Dendritic cell treated with granulocyte-macrophage colony-stimulating factor and Interleukin-4, amounts not matched to agents 40 ng/mL and 50 ng/mL, for 4 days (primary cell): ENCODE measurements at regions of chr14 and their contacts with region 1.

Region 1: DNA sequence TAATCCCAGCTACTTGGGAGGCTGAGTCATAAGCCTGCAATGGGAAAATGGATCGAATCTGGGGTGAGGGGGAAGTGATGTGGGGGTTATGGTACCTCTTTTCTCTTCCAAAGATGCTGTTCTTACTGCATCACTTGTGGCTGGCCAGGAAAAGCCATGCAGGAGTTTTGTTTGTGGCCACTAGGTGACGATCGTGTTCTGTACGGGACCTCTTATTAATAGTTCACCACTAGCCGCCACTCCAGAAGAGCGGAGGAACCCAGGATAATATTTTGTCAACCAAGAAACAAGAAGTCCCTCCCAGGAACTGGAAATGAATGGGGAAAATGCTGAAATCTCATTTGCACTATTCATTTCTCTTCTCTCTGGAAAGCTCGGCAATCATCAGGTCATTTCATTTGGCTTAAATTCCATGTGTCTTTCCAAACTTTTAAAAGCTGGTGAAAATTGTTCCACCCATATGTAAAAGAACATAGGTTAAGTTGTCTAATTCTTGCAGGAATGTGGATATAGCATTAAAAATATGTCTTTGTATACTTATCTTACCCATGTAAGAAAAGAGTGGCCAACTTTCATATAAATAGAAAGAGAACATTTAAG is 8.9 kb downstream of the GPR65 start:
- H3K4me3 Mint-ChIP-seq: no peak overlapping the region
- H3K27ac Mint-ChIP-seq: no peak overlapping the region
- H3K4me1 Mint-ChIP-seq: peaks cover 39% of the 10 kb centered on the region
- H3K27me3 Mint-ChIP-seq: no peaks in the 10 kb centered on the region

Region 2: DNA sequence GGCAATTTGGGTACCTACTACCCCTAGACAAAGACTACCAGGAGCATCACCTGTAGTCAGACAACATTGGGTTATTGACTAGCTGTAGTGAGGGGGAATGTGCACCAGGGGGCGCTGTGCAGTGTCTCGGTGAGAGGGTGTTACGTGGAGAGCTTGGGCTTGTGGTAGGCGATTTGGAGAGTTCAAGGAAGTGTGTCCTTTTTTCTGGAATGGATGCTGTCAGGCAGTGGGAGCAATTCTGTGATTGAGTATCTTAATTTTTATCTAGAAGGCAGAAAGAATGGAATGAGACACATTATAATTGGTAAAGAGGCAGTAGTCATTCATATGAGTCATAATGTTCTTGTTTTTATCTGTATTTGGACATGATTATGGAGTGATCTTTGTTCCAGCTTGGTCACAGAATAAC is 208.5 kb before region 1 on chr14:
- intact Hi-C with region 1: no loop called
- H3K4me3 Mint-ChIP-seq: no peak overlapping the region
- H3K27ac Mint-ChIP-seq: no peak overlapping the region
- H3K4me1 Mint-ChIP-seq: no peaks in the 10 kb centered on the region
- H3K27me3 Mint-ChIP-seq: no peaks in the 10 kb centered on the region

Region 3: DNA sequence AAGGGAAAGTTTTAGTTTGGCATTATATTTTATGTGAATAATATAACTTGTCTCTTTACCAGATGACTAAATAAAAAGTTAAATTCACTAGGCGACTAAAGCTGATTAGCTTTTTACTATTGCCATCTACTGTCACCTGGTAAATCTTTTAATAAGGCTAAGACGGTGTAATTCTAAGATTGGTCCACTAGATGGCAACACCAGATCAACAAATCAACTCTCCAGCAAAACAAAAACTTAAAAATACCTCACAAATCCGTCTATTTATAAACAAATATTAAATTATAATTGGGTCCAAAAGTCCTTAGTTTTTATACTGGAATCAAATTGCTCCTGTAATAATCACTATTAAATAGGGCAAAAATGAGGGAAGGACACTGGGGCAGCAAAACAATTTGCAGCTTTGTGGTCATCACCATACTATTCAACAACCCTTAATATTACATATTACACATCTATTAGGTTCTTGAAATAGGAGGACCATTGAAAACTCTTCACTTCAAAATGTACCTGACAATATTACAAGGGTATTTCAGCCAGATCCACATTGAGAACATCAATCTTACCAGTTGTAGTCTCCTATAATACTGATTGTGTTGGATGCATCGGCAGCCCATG is 68.8 kb before region 1 on chr14:
- intact Hi-C with region 1: loop called (anchors 2 kb)
- H3K4me3 Mint-ChIP-seq: no peak overlapping the region
- H3K27ac Mint-ChIP-seq: no peak overlapping the region
- H3K4me1 Mint-ChIP-seq: peaks cover 6% of the 10 kb centered on the region
- H3K27me3 Mint-ChIP-seq: no peaks in the 10 kb centered on the region

Region 4: GRCh38 chr14:88044851-88045339 is 31.0 kb after region 1 on chr14:
- intact Hi-C with region 1: loop called (anchors 5 kb)
- H3K4me3 Mint-ChIP-seq: peak overlapping the region; percentile 35
- H3K27ac Mint-ChIP-seq: peak overlapping the region; percentile 80
- H3K4me1 Mint-ChIP-seq: peaks cover 56% of the 10 kb centered on the region
- H3K27me3 Mint-ChIP-seq: no peaks in the 10 kb centered on the region

Region 5: DNA sequence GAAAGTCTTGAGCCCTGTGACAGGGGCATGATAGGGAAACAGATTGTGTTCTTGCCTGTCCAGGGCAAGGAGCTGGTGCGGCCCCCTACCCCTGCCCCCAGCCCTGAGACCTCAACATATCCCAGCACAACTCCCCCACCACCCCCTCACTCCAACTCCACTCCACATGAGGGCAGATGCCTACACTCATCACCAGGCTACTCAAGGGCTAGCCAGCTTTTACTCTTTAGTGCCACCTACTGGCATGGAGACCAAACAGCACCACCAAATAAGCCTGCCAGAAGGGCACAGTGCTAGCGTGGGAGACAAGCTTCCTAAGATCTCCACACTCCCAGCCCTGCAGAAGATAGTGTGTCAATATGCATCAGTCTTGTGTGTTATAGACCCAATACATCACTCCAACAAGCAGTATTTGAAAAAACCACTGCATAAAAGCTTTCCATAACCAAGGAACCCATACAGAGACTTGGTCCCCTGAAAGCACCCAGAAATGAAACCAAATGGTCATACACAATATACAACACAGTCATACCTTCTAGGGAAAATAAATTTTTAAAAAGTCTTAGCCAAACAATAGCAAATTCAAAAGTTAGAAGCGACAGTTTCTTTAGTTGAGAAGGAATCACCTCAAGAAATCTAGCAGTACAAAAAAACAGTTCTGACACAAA is 154.8 kb after region 1 on chr14:
- intact Hi-C with region 1: loop called (anchors 1 kb)
- H3K4me3 Mint-ChIP-seq: no peak overlapping the region
- H3K27ac Mint-ChIP-seq: no peak overlapping the region
- H3K4me1 Mint-ChIP-seq: peaks cover 20% of the 10 kb centered on the region
- H3K27me3 Mint-ChIP-seq: peaks cover 38% of the 10 kb centered on the region

Region 6: GRCh38 chr14:88189417-88190191 is 175.8 kb after region 1 on chr14:
- intact Hi-C with region 1: loop called (anchors 1 kb)
- H3K4me3 Mint-ChIP-seq: no peak overlapping the region
- H3K27ac Mint-ChIP-seq: no peak overlapping the region
- H3K4me1 Mint-ChIP-seq: peaks cover 10% of the 10 kb centered on the region
- H3K27me3 Mint-ChIP-seq: peaks cover 12% of the 10 kb centered on the region

Region 7: DNA sequence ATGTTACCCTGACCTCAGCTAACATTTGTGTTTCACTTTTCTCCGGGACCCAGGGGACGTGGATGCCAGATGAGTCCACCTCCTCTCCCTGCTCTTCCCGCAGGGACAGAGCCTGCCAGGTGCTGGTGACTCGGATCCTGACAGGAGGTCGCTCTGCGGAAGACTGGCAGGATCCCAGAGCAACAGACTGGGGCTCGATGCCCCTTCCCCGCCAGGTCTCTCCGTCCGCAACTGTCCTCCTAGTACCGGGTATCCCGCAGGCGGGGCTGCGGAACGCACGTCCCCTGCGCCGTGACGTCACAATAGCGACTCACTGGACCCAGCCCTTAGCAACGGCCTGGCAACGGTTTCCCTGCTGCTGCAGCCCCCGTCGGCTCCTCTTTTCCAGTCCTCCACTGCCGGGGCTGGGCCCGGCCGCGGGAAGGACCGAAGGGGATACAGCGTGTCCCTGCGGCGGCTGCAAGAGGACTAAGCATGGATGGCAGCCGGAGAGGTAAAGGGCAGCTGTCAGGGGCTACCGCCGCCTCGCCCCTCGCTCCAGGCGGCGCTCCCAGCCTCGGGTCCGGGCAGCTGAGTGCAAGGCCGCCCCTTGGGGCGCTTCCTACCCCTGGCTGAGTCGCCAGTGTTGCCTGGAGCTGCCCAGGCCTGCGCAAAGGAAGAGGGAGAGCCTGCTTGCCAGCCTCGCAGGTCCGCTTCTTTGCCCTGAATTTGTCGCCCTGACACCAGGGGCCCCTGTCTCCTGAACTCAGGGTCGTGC is 371.7 kb after region 1 on chr14 and contains the start of gene SPATA7:
- intact Hi-C with region 1: loop called (anchors 5 kb)
- H3K4me3 Mint-ChIP-seq: peak within 1 kb of the TSS; percentile 97
- H3K27ac Mint-ChIP-seq: peak within 1 kb of the TSS; percentile 90
- H3K4me1 Mint-ChIP-seq: peaks cover 13% of the 10 kb centered on the region
- H3K27me3 Mint-ChIP-seq: peaks cover 13% of the 10 kb centered on the region